Psoas muscle (tissue), 8 donors: ENCODE measurements at regions of chr17 and their contacts with region 1.

Region 1: DNA sequence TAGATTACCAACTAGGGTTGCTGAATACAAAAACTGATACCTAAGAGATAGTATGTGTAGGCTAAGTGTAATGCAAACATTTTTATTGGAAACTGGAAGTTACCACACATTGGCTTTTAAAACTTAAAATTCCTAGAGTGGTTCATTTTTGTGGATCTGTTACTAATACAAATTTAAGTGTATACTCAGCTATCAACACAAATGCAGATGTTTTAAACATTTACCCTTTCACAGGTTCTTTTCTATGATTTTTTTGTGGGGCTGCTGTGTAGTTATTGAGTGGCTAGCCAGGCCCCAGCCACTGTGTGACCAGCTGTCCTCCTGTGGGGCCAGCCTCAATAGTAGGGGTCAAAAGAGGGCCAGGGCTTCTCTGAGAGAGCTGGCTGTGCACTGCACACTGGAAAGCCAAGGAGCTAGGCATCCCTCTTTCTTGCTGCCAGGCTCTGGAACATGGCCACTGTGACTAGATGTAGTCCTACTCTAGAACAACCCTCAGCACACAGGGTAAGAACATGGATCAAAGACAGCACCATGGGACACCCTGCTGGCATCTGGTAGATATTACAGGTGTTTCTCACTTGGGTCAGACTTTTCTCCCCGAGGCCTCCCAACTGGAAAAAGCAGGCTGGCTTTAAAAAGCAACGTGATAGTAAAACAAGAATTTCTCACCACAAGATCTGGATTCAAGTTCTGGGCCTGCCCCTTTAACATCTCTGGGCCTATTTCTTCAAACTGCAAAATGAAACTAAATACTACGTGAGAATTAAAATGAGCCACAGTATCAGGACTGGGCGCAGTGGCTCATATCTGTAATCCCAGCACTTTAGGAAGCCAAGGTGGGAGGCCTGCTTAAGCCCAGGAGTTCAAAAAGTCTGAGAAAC is 7.3 kb upstream of the VEZF1 start:
- DNase-seq: peak; percentile 61 to 87
- ATAC-seq: peak; percentile 90 to 94 (median 92)
- H3K4me3 ChIP-seq: no peak overlapping the region
- H3K27ac ChIP-seq: peak overlapping the region; percentile 94
- H3K4me1 ChIP-seq: peaks cover 65% of the 10 kb centered on the region
- H3K27me3 ChIP-seq: no peaks in the 10 kb centered on the region
- CTCF ChIP-seq: peak; percentile 71

Region 2: GRCh38 chr17:57121338-57122042 is 873.8 kb before region 1 on chr17:
- intact Hi-C with region 1: loop called (anchors 10 kb)
- DNase-seq: no peak
- ATAC-seq: peak in 2 of 4 donors; percentile 40 to 56
- H3K4me3 ChIP-seq: no peak overlapping the region
- H3K27ac ChIP-seq: no peak overlapping the region
- H3K4me1 ChIP-seq: no peaks in the 10 kb centered on the region
- H3K27me3 ChIP-seq: no peaks in the 10 kb centered on the region
- CTCF ChIP-seq: peak; percentile 44

Region 3: GRCh38 chr17:57879463-57880433 is 115.6 kb before region 1 on chr17:
- intact Hi-C with region 1: loop called in 1 of 2 experiments (anchors 5 kb)
- DNase-seq: peak; percentile 61 to 85
- ATAC-seq: peak; percentile 62 to 73 (median 68)
- H3K4me3 ChIP-seq: no peak overlapping the region
- H3K27ac ChIP-seq: peak overlapping the region; percentile 84
- H3K4me1 ChIP-seq: peaks cover 66% of the 10 kb centered on the region
- H3K27me3 ChIP-seq: no peaks in the 10 kb centered on the region
- CTCF ChIP-seq: no peak

Region 4: DNA sequence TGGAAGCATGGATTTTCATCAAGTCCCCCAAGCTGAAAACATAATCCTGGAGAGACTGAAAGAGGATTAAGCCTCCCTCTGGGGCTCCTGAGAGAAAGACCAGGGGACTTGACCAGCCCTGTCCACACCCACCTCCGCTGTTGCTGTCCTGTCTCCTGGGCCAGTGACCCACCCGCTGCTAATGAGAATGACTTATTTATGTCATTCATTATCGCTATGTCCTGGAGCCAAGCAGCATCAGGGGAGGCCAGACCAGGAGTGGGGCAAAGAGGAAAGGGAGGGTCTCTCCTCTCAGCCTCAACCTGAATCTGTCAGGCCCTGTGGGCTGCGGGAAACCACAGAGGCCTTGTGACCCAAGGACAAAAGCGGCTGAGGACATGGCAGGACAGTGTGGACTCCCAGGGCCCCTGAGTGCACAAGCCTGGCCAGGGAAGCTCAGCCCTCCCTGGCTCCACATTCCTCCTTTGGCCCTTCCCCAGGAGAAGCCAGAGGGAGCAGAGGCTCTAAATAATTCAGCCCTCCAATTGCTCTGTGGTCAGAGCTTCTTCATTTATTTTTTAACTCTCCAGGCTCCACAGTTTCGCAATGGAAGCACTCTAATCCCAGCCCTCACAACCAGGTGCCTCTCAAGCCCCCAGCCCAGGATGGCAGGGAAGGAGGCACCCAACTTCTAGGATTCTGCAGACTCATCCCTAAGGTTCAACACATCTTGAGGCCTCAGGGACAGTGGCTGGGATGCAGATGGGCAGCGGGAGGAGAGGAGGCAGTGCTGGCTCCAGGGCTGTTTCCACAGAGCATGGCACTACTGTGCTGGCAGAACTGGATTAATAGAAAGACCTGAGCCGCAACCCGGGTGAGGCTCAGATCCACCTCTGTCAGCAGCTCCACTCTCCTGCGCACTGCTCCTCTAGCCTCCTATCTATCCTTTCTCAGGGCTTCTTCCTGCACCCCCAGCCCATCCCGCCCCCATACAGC is 59.2 kb before region 1 on chr17:
- intact Hi-C with region 1: no loop called
- DNase-seq: peak; percentile 69 to 82
- ATAC-seq: peak; percentile 60 to 72 (median 68)
- H3K4me3 ChIP-seq: no peak overlapping the region
- H3K27ac ChIP-seq: peak overlapping the region; percentile 99
- H3K4me1 ChIP-seq: peaks cover 80% of the 10 kb centered on the region
- H3K27me3 ChIP-seq: no peaks in the 10 kb centered on the region
- CTCF ChIP-seq: no peak